ENCODE measurements at regions of chr6 and their contacts with region 1.

Region 1: GRCh38 chr6:87154993-87155841 is at the start of gene ZNF292:
- DNase-seq: peak; percentile 98
- H3K4me3 Mint-ChIP-seq: peak within 1 kb of the TSS; percentile 93
- H3K27ac Mint-ChIP-seq: peak within 1 kb of the TSS; percentile 99
- H3K4me1 Mint-ChIP-seq: peaks cover 41% of the 10 kb centered on the region
- H3K27me3 Mint-ChIP-seq: no peaks in the 10 kb centered on the region
- total RNA-seq, gene ZNF292: 56.2 and 62.7 TPM in 2 replicates

Region 2: GRCh38 chr6:85678602-85679444 is 1476.4 kb before region 1 on chr6:
- intact Hi-C with region 1: loop called (anchors 5 kb)
- DNase-seq: peak; percentile 98
- H3K4me3 Mint-ChIP-seq: peak overlapping the region; percentile 99
- H3K27ac Mint-ChIP-seq: peak overlapping the region; percentile 84
- H3K4me1 Mint-ChIP-seq: peaks cover 39% of the 10 kb centered on the region
- H3K27me3 Mint-ChIP-seq: no peaks in the 10 kb centered on the region

Region 3: GRCh38 chr6:87049779-87050178 is 105.4 kb before region 1 on chr6:
- intact Hi-C with region 1: no loop called
- DNase-seq: no peak
- H3K4me3 Mint-ChIP-seq: no peak overlapping the region
- H3K27ac Mint-ChIP-seq: no peak overlapping the region
- H3K4me1 Mint-ChIP-seq: no peaks in the 10 kb centered on the region
- H3K27me3 Mint-ChIP-seq: peaks cover 13% of the 10 kb centered on the region

Region 4: GRCh38 chr6:87093651-87094050 is 61.6 kb before region 1 on chr6:
- intact Hi-C with region 1: no loop called
- DNase-seq: no peak
- H3K4me3 Mint-ChIP-seq: no peak overlapping the region
- H3K27ac Mint-ChIP-seq: no peak overlapping the region
- H3K4me1 Mint-ChIP-seq: peaks cover 2% of the 10 kb centered on the region
- H3K27me3 Mint-ChIP-seq: peaks cover 38% of the 10 kb centered on the region

Region 5: DNA sequence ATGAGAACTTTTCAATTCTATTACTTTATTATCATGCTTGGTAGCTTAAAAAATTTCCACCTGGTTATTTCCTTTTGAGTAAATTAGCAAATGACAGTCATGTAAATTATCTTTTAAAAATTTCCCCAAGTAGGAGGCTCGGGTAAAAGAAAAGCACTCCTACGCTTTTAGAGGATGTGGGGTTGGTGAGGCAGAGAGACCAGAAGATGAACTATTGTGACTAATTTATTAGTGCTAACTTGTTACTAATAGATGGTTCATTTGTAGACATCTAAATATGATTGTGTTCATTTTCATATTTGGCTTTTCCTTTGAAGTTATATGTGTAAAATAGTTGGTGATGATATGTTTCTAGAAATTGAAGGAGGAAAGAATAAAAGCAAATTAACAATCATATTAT is 27.1 kb after region 1 on chr6:
- intact Hi-C with region 1: loop called (anchors 1 kb)
- DNase-seq: no peak
- H3K4me3 Mint-ChIP-seq: peak overlapping the region; percentile 33
- H3K27ac Mint-ChIP-seq: peak overlapping the region; percentile 89
- H3K4me1 Mint-ChIP-seq: peaks cover 55% of the 10 kb centered on the region
- H3K27me3 Mint-ChIP-seq: no peaks in the 10 kb centered on the region

Region 6: GRCh38 chr6:87230801-87231200 is 75.6 kb after region 1 on chr6:
- intact Hi-C with region 1: loop called (anchors 5 kb)
- DNase-seq: no peak
- H3K4me3 Mint-ChIP-seq: no peak overlapping the region
- H3K27ac Mint-ChIP-seq: no peak overlapping the region
- H3K4me1 Mint-ChIP-seq: peaks cover 13% of the 10 kb centered on the region
- H3K27me3 Mint-ChIP-seq: no peaks in the 10 kb centered on the region

Region 7: GRCh38 chr6:87472525-87473418 is 317.6 kb after region 1 on chr6 and contains the start of gene SLC35A1:
- intact Hi-C with region 1: loop called (anchors 2 kb)
- DNase-seq: peak; percentile 79
- H3K4me3 Mint-ChIP-seq: peak within 1 kb of the TSS; percentile 88
- H3K27ac Mint-ChIP-seq: peak within 1 kb of the TSS; percentile 88
- H3K4me1 Mint-ChIP-seq: peaks cover 7% of the 10 kb centered on the region
- H3K27me3 Mint-ChIP-seq: peaks cover 8% of the 10 kb centered on the region
- total RNA-seq, gene SLC35A1: 10.5 and 11.1 TPM in 2 replicates

Region 8: DNA sequence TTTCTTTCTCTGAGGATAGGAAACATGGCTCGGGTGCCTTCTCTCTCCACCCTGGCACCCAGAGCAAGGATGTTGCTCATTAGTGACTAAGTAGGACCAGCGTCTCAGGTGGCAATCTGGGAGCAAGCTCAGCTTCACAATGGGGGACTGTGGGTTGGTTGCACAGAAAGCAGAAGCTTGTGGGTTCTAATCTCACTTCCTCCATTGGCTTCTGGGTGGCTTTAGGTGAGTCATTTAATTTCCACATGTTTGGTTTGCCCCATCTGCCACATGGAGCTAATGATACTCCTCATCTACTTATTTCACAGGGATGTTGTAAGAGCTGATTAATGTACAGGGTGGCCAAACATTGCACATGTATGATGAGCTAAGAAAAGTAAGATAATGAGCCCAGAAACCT is 601.6 kb after region 1 on chr6:
- intact Hi-C with region 1: no loop called
- DNase-seq: peak; percentile 22
- H3K4me3 Mint-ChIP-seq: no peak overlapping the region
- H3K27ac Mint-ChIP-seq: no peak overlapping the region
- H3K4me1 Mint-ChIP-seq: peaks cover 16% of the 10 kb centered on the region
- H3K27me3 Mint-ChIP-seq: peaks cover 30% of the 10 kb centered on the region

Region 9: DNA sequence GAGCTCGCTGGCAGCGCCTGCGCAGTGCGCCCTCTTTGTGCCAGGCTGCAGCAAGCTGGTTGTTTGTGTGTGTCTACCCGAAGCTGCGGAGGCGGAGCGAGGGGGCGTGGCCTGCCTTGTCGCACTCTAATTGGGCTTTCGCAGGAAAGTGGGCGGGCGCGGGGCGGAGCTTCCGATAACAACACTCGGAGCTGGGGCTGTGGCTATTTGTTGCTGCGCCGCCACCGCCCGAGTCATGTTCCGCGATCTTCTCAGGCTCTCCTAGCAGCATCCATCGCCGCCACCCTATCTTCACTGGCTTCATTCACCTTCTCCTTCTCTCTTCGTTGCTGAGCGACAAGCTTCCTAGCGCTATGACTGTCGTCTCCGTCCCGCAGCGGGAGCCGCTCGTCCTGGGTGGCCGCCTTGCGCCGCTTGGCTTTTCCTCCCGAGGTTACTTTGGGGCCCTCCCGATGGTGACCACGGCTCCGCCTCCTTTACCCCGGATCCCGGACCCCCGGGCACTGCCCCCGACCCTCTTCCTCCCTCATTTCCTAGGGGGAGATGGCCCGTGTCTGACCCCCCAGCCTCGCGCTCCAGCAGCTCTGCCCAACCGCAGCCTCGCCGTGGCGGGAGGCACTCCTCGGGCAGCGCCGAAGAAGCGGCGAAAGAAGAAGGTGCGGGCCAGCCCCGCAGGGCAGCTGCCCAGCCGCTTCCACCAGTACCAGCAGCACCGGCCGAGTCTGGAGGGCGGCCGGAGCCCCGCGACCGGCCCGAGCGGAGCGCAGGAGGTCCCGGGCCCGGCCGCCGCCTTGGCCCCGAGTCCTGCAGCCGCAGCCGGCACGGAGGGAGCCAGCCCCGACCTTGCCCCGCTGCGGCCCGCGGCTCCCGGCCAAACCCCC is 1925.6 kb after region 1 on chr6 and contains the start of gene PNRC1:
- intact Hi-C with region 1: loop called (anchors 2 kb)
- DNase-seq: peak; percentile 100
- H3K4me3 Mint-ChIP-seq: peak within 1 kb of the TSS; percentile 92
- H3K27ac Mint-ChIP-seq: peak within 1 kb of the TSS; percentile 95
- H3K4me1 Mint-ChIP-seq: peaks cover 24% of the 10 kb centered on the region
- H3K27me3 Mint-ChIP-seq: no peaks in the 10 kb centered on the region
- total RNA-seq, gene PNRC1: 60.7 and 66.0 TPM in 2 replicates